Heart right ventricle (tissue), 16 donors: ENCODE measurements at regions of chr5 and their contacts with region 1.

Region 1: DNA sequence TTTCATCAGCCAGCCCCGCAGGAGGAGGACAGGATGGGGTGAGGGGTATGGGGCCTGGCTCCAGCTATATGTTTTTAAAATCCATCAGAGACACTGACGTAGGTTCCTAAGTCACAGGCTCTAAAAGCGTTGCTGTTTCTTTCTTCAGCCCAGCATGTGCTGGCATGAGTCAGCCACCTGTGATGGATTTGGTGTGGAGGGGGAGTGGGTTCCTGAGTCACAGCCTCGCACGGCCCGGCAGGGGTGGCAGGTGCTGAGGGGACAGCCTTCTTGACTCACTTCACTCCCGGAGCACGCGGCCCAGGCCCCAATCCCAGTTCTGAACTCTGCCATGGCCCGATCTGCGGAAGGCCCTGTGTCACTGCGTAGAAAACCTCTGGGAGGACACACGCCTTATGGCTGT is 38.8 kb upstream of the RPL26L1 start:
- DNase-seq: no peak
- ATAC-seq: no peak
- H3K4me3 ChIP-seq: no peak overlapping the region
- H3K27ac ChIP-seq: peak overlapping the region in 1 of 10 donors; percentile 26
- H3K4me1 ChIP-seq: peaks cover 0 to 9% (median 0%) of the 10 kb centered on the region in 9 donors
- H3K27me3 ChIP-seq: no peaks in the 10 kb centered on the region
- CTCF ChIP-seq: no peak

Region 2: DNA sequence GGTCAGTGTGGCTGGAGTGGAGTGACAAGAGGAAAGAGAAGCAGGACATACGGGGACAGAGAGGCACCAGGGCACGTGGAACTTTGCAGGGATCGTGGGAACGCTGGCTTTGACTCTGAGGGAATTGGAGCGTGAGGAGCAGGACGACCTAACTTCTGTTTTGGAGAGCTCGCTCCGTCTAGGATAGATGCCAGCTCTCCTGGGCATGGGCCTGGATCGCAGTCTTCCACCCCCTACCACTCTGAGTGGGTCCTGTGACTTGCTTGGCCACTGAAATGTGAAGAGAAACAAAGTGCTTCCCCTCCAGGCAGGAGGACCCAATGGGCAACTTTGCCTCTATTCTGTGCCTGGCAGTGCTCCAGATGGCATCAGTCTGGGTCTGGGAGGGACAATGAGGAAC is 457.4 kb before region 1 on chr5:
- intact Hi-C with region 1: loop called in 1 of 10 experiments (anchors 10 kb)
- DNase-seq: no peak
- ATAC-seq: peak in 1 of 8 donors; percentile 42
- H3K4me3 ChIP-seq: no peak overlapping the region
- H3K27ac ChIP-seq: no peak overlapping the region
- H3K4me1 ChIP-seq: peaks cover 0 to 37% (median 7%) of the 10 kb centered on the region in 9 donors
- H3K27me3 ChIP-seq: no peaks in the 10 kb centered on the region
- CTCF ChIP-seq: no peak

Region 3: DNA sequence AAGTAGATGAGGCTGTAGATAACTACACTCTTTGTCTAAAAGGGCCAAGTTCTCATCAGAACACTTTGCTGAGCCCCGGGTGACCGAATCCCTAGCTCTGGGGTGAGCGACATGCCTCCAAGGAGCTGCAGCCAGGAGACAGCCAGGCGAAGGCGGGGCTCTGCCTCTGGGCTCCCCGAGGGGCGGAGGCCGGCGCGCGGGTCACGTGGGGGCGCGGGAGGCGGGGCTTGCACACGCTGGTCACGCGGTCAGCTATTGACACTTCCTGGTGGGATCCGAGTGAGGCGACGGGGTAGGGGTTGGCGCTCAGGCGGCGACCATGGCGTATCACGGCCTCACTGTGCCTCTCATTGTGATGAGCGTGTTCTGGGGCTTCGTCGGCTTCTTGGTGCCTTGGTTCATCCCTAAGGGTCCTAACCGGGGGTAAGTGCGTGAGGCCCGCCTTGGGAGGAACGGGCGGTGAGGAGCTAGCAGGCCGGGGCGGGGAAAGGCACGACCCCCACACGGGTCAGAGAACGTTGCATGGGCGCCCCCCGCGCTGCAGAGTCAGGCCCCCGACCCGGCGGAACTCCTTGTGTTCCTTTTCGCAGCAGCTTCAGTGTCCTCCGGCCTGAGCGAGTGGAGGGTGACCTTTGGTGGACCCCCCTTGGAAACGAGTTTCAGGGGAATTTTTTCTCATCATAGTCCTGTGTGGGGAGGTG is 63.2 kb after region 1 on chr5 and contains the start of gene ATP6V0E1:
- intact Hi-C with region 1: no loop called
- DNase-seq: peak; percentile 96 to 98
- ATAC-seq: peak; percentile 98 to 99 (median 99)
- H3K4me3 ChIP-seq: peak within 1 kb of the TSS; percentile 65 to 95 (median 88)
- H3K27ac ChIP-seq: peak within 1 kb of the TSS; percentile 86 to 95 (median 92)
- H3K4me1 ChIP-seq: peaks cover 0 to 42% (median 17%) of the 10 kb centered on the region in 9 donors
- H3K27me3 ChIP-seq: no peaks in the 10 kb centered on the region
- CTCF ChIP-seq: no peak
- total RNA-seq, gene ATP6V0E1: 164 to 218 (median 194) TPM

Region 4: DNA sequence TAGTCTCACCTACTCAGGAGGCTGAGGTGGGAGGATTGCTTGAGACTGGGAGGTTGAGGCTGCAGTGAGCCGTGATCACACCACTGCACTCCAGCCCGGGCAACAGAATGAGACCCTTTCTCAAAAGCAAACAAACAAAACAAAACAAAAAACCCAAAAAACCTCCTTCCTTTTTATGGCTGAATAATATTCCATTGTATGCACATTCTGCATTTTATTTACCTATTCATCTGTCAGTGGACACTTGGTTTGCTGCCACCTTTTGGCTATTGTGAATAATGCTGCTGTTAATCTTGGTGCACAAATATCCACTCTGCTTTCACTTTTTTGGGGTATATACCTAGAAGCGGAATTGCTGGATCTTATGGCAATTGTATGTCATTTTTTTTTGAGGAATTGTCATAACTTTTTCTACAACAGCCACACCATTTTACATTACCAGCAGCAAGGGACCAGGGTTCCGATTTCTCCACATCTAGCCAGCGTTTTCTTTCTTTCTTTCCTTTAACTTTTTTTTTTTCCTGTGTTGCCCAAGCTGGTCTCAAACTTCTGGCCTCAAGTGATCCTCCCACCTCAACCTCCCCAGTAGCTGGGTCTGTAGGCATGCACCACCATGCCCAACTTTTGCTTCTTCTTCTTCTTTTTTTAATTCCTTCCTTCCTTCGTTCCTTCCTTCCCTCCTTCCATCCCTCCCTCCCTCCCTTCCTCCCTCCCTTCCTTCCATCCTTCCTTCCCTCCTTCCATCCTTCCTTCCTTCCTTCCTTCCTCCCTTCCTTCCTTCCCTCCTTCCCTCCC is 283.9 kb after region 1 on chr5:
- intact Hi-C with region 1: no loop called
- DNase-seq: no peak
- ATAC-seq: no peak
- H3K4me3 ChIP-seq: no peak overlapping the region
- H3K27ac ChIP-seq: no peak overlapping the region
- H3K4me1 ChIP-seq: no peaks in the 10 kb centered on the region
- H3K27me3 ChIP-seq: peaks cover 0 to 27% (median 15%) of the 10 kb centered on the region in 7 donors
- CTCF ChIP-seq: peak; percentile 9 to 66 (median 48)